Activated naive CD4-positive, alpha-beta T cell treated with anti-CD3 and anti-CD28 coated beads for 36 hours (primary cell): ENCODE measurements at regions of chr2 and their contacts with region 1.

Region 1: DNA sequence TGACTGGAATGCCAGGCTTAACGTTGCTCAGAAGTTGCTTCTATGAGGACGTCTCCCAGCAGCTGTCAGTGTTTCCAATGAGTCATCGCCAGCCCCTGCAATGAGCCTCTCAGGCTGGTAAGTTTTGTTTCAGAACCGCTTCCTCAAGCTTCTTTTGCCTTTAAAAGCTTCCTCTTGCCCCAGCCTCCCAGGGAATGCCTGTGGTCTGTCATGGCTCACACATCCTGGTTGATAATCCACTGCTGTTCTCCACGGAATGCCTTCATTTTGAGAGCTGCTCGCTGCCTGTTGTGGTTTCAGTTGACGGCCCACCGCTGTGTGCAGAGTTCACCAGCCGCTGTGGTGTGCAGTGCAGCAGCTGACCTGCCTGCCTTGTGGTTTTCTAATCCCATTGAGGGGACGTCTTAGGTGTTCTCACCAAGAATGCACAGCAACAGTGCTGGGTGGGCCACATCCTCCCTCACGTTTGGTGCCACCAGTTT is 96.4 kb downstream of the RTP5 start:
- DNase-seq: peak; percentile 91
- H3K4me3 Mint-ChIP-seq: peak overlapping the region; percentile 43
- H3K27ac Mint-ChIP-seq: peak overlapping the region; percentile 82
- H3K4me1 Mint-ChIP-seq: peaks cover 47% of the 10 kb centered on the region
- H3K27me3 Mint-ChIP-seq: no peaks in the 10 kb centered on the region

Region 2: GRCh38 chr2:241686649-241687425 is 279.1 kb before region 1 on chr2 and contains the start of gene DTYMK:
- CTCF ChIA-PET with region 1: no interaction called
- intact Hi-C with region 1: loop called (anchors 5 kb)
- DNase-seq: peak; percentile 97
- H3K4me3 Mint-ChIP-seq: peak within 1 kb of the TSS; percentile 99
- H3K27ac Mint-ChIP-seq: peak within 1 kb of the TSS; percentile 94
- H3K4me1 Mint-ChIP-seq: peaks cover 39% of the 10 kb centered on the region
- H3K27me3 Mint-ChIP-seq: no peaks in the 10 kb centered on the region
- total RNA-seq, gene DTYMK: 88.0 to 93.8 TPM

Region 3: GRCh38 chr2:241734467-241735208 is 231.3 kb before region 1 on chr2 and contains the start of gene D2HGDH:
- CTCF ChIA-PET with region 1: no interaction called
- intact Hi-C with region 1: loop called (anchors 5 kb)
- DNase-seq: peak; percentile 95
- H3K4me3 Mint-ChIP-seq: peak within 1 kb of the TSS; percentile 78
- H3K27ac Mint-ChIP-seq: no peak within 1 kb of the TSS
- H3K4me1 Mint-ChIP-seq: peaks cover 52% of the 10 kb centered on the region
- H3K27me3 Mint-ChIP-seq: no peaks in the 10 kb centered on the region
- total RNA-seq, gene D2HGDH: 19.4 to 23.1 TPM

Region 4: GRCh38 chr2:241844066-241844728 is 121.8 kb before region 1 on chr2:
- CTCF ChIA-PET with region 1: no interaction called
- intact Hi-C with region 1: loop called (anchors 5 kb)
- DNase-seq: peak; percentile 90
- H3K4me3 Mint-ChIP-seq: peak overlapping the region; percentile 56
- H3K27ac Mint-ChIP-seq: peak overlapping the region; percentile 74
- H3K4me1 Mint-ChIP-seq: peaks cover 37% of the 10 kb centered on the region
- H3K27me3 Mint-ChIP-seq: peaks cover 6% of the 10 kb centered on the region

Region 5: GRCh38 chr2:241940329-241940728 is 25.6 kb before region 1 on chr2:
- CTCF ChIA-PET with region 1: no interaction called
- intact Hi-C with region 1: no loop called
- DNase-seq: peak; percentile 25
- H3K4me3 Mint-ChIP-seq: no peak overlapping the region
- H3K27ac Mint-ChIP-seq: no peak overlapping the region
- H3K4me1 Mint-ChIP-seq: peaks cover 16% of the 10 kb centered on the region
- H3K27me3 Mint-ChIP-seq: no peaks in the 10 kb centered on the region

Region 6: DNA sequence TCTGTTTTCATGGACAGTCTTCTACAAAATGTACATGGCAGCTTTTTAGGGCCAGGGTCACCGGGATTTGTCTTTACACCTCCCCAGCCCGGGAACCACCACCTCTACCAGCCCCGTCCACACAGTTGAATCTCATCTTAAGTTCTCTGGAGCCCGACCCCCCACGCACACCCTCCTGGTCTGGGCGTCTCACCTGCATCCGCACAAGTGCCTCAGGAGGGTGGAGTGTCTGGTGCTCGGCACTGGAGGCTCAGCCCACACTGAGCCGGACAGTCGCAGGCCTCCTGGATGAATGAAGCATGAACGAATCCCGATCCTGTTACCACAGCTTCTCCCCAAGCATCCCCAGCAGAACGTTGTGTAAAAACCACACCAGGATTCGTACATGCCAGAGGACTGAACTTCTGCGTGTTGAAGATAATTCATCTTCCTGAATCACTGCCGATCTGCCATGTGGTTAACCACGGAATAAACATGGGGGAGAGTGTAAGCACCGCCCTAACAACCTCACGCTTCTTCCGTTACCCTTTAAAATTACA is 65.6 kb after region 1 on chr2:
- CTCF ChIA-PET with region 1: no interaction called
- intact Hi-C with region 1: loop called (anchors 1 kb)
- DNase-seq: peak; percentile 76
- H3K4me3 Mint-ChIP-seq: peak overlapping the region; percentile 69
- H3K27ac Mint-ChIP-seq: peak overlapping the region; percentile 11
- H3K4me1 Mint-ChIP-seq: peaks cover 36% of the 10 kb centered on the region
- H3K27me3 Mint-ChIP-seq: no peaks in the 10 kb centered on the region

Region 7: DNA sequence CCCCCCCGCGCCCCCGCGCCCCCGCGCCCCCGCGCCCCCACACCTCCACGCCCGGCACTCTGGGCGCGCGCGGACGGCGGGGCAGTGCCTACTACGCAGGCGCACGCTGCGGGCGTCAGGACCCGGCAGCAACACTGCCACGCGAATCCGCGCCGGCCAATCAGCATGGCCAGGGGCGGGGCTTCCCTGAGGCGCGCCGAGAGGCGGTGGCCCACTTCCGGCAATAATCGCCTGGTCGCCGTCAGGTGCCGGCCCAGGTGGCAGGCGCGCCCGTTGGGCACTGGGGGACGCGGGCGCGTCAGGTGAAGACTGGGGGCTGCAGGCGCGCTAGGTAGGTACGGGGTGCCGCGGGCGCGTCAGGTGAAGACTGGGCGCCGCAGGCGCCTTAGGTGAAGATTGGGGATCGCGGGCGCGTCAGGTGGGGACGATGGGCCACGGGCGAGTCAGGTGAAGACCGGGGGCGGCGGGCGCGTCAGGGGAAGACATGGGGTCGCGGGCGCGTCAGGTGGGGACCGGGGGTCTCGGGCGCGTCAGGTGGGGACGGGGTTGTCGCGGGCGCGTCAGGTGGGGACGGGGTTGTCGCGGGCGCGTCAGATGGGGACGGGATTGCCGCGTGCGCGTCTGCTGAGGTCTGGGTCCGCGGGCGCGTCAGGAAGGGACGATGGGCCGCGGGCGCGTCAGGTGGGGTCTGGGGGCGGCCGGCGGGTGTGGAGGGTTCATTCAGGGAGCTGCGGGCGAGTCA is 122.7 kb after region 1 on chr2:
- CTCF ChIA-PET with region 1: no interaction called
- intact Hi-C with region 1: loop called (anchors 1 kb)
- DNase-seq: peak; percentile 93
- H3K4me3 Mint-ChIP-seq: peak overlapping the region; percentile 87
- H3K27ac Mint-ChIP-seq: peak overlapping the region; percentile 46
- H3K4me1 Mint-ChIP-seq: peaks cover 34% of the 10 kb centered on the region
- H3K27me3 Mint-ChIP-seq: no peaks in the 10 kb centered on the region